Panc1 (cell line): ENCODE measurements at regions of chr1 and their contacts with region 1.

Region 1: DNA sequence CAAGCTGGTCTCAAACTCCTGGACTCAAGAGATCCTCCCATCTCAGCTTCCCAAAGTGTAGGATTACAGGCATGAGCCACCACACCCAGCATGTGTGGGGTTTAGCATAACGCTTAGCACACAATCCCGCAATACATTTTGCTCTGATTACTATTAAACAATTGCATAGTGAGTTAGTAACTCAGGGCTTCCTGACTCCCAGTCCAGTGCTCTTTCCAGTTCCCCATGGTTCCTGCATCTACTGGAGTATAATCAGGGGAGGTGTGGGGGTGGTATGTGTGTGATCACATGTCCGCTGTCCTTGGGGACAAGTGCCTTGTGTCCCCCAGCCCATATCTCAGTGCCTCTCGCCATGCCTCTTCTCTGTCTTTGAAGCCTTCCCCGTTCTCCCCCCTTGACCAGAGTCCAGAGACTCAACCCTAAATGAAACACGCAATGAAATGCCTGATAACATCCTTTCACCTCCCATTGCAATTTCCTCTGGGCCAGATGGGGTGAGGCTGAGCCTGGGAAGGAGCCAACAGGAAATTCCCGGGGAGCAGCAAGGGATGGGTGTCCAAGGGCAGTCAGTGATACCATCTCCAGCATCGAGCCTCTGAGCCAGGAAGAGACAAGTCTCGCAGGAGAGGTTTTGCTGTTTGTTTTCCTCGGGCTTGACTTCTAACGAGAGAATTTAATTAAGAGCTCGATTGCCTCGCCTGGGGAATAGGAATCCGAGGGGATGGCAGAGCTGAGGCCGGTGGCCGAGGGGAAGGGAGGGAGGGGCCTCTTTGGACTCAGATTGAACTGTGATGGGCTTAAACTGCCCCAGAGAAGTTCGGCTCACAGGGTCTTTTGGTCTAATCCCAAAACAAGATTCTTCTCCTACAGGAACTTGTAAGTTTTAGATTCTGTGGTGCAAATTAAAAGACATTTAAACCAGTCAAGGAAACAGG is 7.7 kb upstream of the HTR1D start:
- DNase-seq: no peak
- ATAC-seq: peak; percentile 50
- H3K4me3 ChIP-seq: no peak overlapping the region
- H3K27ac ChIP-seq: no peak overlapping the region; the same call in 1 of the 2 replicates
- H3K4me1 ChIP-seq: peaks cover 6% of the 10 kb centered on the region
- H3K27me3 ChIP-seq: no peaks in the 10 kb centered on the region
- CTCF ChIP-seq: no peak

Region 2: GRCh38 chr1:22556391-22557104 is 668.4 kb before region 1 on chr1:
- CTCF ChIA-PET with region 1: no interaction called
- POLR2A ChIA-PET with region 1: interaction called, 13 read pairs
- in situ Hi-C with region 1: no loop called
- intact Hi-C with region 1: no loop called
- DNase-seq: no peak
- ATAC-seq: peak; percentile 19; the same call in 1 of the 2 replicates
- H3K4me3 ChIP-seq: no peak overlapping the region
- H3K27ac ChIP-seq: no peak overlapping the region
- H3K4me1 ChIP-seq: no peaks in the 10 kb centered on the region
- H3K27me3 ChIP-seq: peaks cover 6% of the 10 kb centered on the region
- CTCF ChIP-seq: no peak

Region 3: DNA sequence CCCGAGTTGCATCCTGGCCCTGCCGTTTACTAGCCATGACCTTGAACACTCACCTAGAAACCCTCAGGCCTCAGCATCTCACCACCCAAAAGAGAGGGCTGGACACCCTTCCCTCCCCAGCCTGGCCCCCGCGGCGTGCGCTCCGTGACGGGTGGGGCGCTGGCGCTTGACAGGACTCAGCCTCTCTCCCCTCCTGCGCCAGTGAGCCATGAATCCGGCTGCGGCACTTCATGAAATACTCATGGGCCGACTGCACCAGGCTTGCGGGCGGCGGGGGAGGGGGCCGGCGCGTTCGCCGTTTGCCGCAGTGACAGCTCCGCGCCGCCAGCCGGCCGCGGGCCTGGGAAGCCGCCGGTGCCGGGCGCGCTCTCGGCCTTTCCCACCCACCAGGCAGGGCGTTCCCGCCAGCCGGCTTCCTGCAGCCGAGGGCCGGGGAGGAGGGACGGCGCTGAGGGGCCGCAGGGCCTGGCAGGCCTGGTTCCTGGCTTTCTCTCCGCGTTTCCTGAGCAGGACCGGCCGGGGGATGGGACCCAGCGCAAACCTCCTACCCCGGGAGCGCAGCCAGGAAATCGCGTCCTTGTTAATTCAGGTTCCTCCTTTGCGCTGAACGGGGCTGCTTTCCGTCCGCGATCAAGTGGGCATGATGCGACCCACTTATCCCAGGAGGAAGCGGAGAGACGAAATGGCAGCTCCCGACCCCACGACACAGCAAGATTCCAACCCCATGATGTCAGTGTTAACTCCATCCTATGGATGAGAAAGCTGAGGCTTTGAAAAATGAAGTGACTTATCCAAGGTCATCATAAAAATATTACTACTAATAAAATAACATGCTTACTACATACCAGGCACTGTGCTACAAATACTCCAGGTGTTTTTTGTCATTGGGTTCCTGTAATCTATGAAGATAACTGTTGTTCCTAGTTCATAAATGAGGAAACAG is 47.3 kb before region 1 on chr1:
- CTCF ChIA-PET with region 1: no interaction called
- POLR2A ChIA-PET with region 1: no interaction called
- in situ Hi-C with region 1: no loop called
- intact Hi-C with region 1: no loop called
- DNase-seq: no peak
- ATAC-seq: peak; percentile 86
- H3K4me3 ChIP-seq: peak overlapping the region; percentile 46 to 73
- H3K27ac ChIP-seq: peak overlapping the region; percentile 67
- H3K4me1 ChIP-seq: peaks cover 6% of the 10 kb centered on the region
- H3K27me3 ChIP-seq: no peaks in the 10 kb centered on the region
- CTCF ChIP-seq: no peak

Region 4: DNA sequence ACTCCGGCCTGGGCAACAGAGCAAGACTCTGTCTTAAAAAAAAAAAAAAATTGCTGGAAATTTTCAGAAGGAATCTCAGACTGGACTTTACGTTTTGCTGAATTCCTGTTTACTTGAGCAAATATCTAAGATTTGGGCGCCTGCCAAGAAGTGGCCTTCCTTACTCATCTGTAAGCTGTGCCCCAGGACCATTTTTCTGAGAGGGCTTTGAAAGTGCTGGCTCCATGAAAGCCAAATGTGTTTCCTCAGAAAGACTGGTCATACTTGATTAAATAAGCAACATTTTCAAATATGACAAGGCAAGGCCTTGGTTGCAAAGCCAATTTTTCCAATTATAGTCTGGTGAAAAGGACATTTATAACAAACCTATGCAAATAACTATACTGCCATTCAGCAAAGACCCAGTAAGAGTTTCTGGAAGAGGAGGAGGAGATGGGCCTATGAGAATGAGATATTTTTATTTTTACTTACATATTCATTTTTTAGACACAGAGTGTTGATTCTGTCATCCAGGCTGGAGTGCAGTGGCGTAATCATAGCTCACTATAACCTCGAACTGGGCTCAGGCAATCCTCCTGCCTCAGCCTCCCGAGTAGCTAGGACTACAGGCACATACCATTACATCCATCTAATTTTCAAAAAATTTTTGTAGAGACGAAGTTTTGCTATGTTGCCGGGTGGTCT is 48.6 kb after region 1 on chr1:
- CTCF ChIA-PET with region 1: no interaction called
- POLR2A ChIA-PET with region 1: no interaction called
- in situ Hi-C with region 1: no loop called
- intact Hi-C with region 1: loop called (anchors 10 kb)
- DNase-seq: no peak
- ATAC-seq: peak; percentile 56
- H3K4me3 ChIP-seq: no peak overlapping the region
- H3K27ac ChIP-seq: no peak overlapping the region
- H3K4me1 ChIP-seq: peaks cover 2% of the 10 kb centered on the region
- H3K27me3 ChIP-seq: no peaks in the 10 kb centered on the region
- CTCF ChIP-seq: no peak

Region 5: DNA sequence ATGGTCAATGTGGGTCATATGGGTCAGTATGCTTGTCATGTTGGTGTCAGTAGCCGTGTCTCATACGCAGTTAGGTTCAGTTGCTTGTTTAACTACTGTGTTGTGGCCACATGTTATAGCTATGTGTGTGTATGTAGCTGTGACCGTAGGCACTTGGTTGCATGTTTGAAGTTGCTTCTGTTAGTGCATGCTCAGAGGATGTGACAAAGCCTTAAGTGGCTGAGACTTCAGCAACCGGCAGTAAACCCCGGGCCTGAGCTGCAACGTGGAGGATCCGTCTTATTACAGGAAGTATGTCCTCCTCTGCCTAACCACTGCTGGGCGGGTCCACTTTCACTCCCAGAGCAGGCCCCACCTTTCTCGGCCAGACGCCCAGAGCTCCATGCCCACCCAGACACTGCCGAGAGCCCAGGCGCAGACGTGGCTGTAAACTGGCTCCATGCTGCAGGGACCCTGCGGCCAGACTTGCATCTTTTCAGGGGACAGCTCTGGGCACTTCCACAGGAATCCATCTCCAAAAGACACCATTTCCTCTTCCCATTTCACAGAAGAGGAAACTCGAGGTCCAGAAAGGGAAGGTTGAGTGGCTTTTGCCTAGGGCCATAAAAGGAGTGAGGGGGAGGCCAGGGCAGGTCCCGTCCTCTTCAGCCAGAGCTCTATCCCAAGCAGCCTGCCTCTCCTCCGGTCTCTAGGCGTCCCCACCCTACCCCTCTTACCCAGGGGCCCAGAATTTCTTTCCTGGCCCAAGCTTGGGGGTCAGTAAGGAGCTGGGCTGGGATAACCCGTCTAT is 197.5 kb after region 1 on chr1:
- CTCF ChIA-PET with region 1: no interaction called
- POLR2A ChIA-PET with region 1: no interaction called
- in situ Hi-C with region 1: no loop called
- intact Hi-C with region 1: no loop called
- DNase-seq: no peak
- ATAC-seq: no peak
- H3K4me3 ChIP-seq: no peak overlapping the region
- H3K27ac ChIP-seq: no peak overlapping the region
- H3K4me1 ChIP-seq: peaks cover 13% of the 10 kb centered on the region
- H3K27me3 ChIP-seq: no peaks in the 10 kb centered on the region
- CTCF ChIP-seq: no peak